Spleen (tissue), 13 donors: ENCODE measurements at regions of chr10 and their contacts with region 1.

Region 1: GRCh38 chr10:58178811-58179210 is 88.9 kb downstream of the IPMK start:
- DNase-seq: no peak
- H3K4me3 ChIP-seq: no peak overlapping the region
- H3K27ac ChIP-seq: no peak overlapping the region
- H3K4me1 ChIP-seq: no peaks in the 10 kb centered on the region
- H3K27me3 ChIP-seq: no peaks in the 10 kb centered on the region
- CTCF ChIP-seq: no peak
- POLR2A ChIP-seq: no peak

Region 2: GRCh38 chr10:58291538-58292174 is 112.8 kb after region 1 on chr10:
- intact Hi-C with region 1: loop called (anchors 2 kb)
- DNase-seq: no peak
- H3K4me3 ChIP-seq: no peak overlapping the region
- H3K27ac ChIP-seq: no peak overlapping the region
- H3K4me1 ChIP-seq: peaks cover 0 to 7% (median 0%) of the 10 kb centered on the region in 6 donors
- H3K27me3 ChIP-seq: no peaks in the 10 kb centered on the region
- CTCF ChIP-seq: peak; percentile 18 to 80 (median 59)
- POLR2A ChIP-seq: no peak